H1 (cell line): ENCODE measurements at regions of chr5 and their contacts with region 1.

Region 1: DNA sequence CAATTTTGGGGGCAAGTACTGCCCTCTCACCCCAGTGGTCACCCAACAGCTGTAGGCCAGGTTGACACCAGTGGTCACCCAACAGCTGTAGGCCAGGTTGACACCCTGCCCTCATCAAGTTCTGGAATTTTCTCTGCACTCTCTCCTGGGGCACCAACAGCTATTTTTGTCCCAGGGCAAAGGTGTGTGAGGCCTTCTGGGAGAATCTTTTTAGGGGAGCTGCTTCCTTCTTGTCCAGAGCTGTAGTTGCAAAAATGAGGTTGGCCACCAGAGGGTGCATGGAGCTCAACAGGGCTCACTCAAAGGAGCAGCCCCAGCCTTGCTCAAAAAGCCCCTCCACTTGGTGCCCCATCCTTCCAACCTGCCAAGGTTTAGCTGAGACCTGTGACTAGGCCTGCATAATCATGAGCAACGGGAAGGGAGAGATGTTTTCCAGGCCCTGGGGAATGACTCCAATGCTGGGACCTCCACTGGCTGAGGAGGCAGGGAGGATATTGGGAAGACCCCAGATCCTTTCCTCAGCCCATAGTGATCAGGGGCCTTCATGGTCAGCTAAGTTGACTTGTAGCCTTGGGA is 10.6 kb upstream of the P4HA2 start:
- DNase-seq: peak in 1 of 2 experiments; percentile 95
- H3K4me3 ChIP-seq: no peak overlapping the region
- H3K27ac ChIP-seq: no peak overlapping the region
- H3K4me1 ChIP-seq: no peaks in the 10 kb centered on the region
- H3K27me3 ChIP-seq: no peaks in the 10 kb centered on the region
- CTCF ChIP-seq: peak; percentile 64 to 85 (median 75)
- EP300 ChIP-seq: no peak
- POLR2A ChIP-seq: no peak
- RAD21 ChIP-seq: peak; percentile 76 to 83

Region 2: GRCh38 chr5:132190161-132190817 is 48.0 kb before region 1 on chr5:
- CTCF ChIA-PET with region 1: interaction called, 16 read pairs
- POLR2A ChIA-PET with region 1: no interaction called
- DNase-seq: no peak
- H3K4me3 ChIP-seq: no peak overlapping the region
- H3K27ac ChIP-seq: no peak overlapping the region
- H3K4me1 ChIP-seq: no peaks in the 10 kb centered on the region
- H3K27me3 ChIP-seq: no peaks in the 10 kb centered on the region
- CTCF ChIP-seq: peak in 2 of 3 experiments; percentile 77 to 90; a peak in 3 of 4 replicates
- EP300 ChIP-seq: no peak
- POLR2A ChIP-seq: no peak
- RAD21 ChIP-seq: peak; percentile 55 to 65

Region 3: DNA sequence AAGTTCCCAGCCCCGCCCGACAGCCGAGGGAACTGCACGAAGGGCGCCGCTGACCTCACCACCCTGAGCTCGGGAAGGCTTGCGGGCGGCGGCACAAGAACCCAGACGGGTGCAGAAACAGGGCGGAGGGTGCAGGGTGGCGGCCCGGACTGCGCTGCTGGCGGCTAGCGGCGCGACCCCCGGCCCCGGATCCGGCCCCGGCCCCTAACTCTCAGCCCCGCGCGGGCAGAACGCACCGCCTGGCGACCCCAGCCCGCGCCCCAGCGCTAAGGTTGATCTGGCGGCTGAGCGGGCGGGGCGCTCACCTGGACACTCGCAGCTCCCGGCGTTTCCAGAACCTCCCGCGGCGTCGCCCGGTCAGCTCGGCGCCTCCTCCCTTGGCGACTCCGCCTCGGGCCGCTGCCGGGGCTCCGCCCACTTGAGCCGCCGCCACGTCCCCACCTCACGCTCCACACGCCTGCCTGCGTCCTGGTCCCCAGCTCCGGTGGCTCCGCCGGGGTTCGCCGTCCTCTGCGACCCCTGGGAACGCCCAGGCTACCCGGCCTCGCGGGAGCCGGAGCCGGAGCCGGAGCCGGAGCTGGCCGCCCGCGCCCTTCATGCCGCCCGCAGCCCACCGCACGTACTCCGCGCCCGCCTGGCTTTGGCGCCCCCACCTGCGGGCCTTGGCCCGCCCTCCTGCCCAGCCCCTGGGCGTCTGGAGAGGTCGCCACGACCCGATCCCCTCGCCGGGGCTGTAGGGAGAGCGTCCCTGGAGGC is 10.6 kb before region 1 on chr5 and contains the start of gene P4HA2:
- CTCF ChIA-PET with region 1: interaction called, 39 read pairs
- POLR2A ChIA-PET with region 1: interaction called, 11 read pairs
- DNase-seq: peak; percentile 46 to 86
- H3K4me3 ChIP-seq: peak within 1 kb of the TSS; percentile 57 to 77 (median 60)
- H3K27ac ChIP-seq: no peak within 1 kb of the TSS; the same call in 1 of the 2 replicates
- H3K4me1 ChIP-seq: peaks cover 0 to 7% (median 5%) of the 10 kb centered on the region in 4 experiments; a peak in 4 of 7 replicates
- H3K27me3 ChIP-seq: peaks cover 3 to 22% (median 20%) of the 10 kb centered on the region in 4 experiments
- CTCF ChIP-seq: no peak
- EP300 ChIP-seq: no peak
- POLR2A ChIP-seq: peak in 1 of 2 experiments; percentile 54; a peak in 1 of 3 replicates
- RAD21 ChIP-seq: no peak; a peak in 1 of 4 replicates
- total RNA-seq, gene P4HA2: 7.4 and 8.2 TPM in 2 replicates

Region 4: GRCh38 chr5:132272311-132273210 is 34.3 kb after region 1 on chr5:
- CTCF ChIA-PET with region 1: interaction called, 27 read pairs
- POLR2A ChIA-PET with region 1: no interaction called
- DNase-seq: peak in 1 of 2 experiments; percentile 97
- H3K4me3 ChIP-seq: no peak overlapping the region
- H3K27ac ChIP-seq: no peak overlapping the region
- H3K4me1 ChIP-seq: peaks cover 0 to 6% (median under 1%) of the 10 kb centered on the region in 4 experiments; a peak in 3 of 7 replicates
- H3K27me3 ChIP-seq: no peaks in the 10 kb centered on the region
- CTCF ChIP-seq: peak; percentile 47 to 76 (median 73)
- EP300 ChIP-seq: no peak
- POLR2A ChIP-seq: no peak
- RAD21 ChIP-seq: peak; percentile 66 to 75

Region 5: DNA sequence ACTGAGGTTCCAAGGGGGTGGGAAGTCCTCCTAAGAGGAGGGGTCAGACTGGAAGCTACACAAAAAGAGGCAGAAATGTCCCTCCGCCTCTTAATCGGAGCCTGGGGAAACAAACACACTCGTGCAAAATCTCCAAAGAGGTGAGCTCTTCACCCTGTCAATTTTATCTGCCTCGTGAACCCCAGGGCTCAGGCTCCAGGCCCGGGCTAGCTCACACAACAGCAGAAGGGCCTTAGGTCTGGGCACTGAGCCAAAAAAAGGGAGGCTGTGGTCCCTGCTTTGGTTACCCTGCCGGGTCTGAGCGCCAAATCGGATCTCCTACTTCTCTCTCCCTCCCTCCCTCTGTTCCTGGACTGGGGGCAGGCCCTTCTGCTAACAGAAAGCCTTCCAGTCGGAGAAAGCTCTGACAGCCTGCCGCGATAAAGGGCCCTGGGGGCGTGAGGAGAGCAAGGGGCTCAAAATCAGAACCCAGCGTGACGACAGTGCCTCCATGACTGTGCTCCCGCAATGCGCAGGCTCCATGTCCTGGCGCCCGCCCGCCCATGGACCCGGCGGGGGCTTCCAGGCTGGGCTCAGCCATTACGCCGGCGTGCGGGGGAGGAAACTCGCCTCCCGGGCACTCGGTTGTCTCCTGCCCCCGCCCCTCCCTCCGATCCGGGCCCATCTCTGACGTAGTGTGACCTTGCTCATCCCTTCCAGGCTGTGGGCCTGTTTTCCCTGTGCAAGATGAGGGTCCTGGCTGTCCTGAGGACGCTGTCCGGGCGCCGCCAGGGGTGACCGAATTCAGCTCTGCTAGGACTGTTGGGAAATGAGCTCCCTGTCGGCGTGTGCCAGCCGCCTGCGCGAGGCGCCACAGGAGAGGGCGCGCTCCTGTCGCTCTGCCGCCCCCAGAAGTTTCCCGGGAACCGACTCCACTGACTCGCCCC is 55.1 kb after region 1 on chr5:
- CTCF ChIA-PET with region 1: interaction called, 27 read pairs
- POLR2A ChIA-PET with region 1: no interaction called
- DNase-seq: peak in 1 of 2 experiments; percentile 89
- H3K4me3 ChIP-seq: peak overlapping the region; percentile 53 to 75 (median 65)
- H3K27ac ChIP-seq: peak overlapping the region; percentile 74
- H3K4me1 ChIP-seq: peaks cover 0 to 12% (median 3%) of the 10 kb centered on the region in 4 experiments; a peak in 5 of 7 replicates
- H3K27me3 ChIP-seq: peaks cover 2 to 21% (median 16%) of the 10 kb centered on the region in 4 experiments
- CTCF ChIP-seq: no peak
- EP300 ChIP-seq: peak in 1 of 2 experiments; percentile 56; a peak in 1 of 3 replicates
- POLR2A ChIP-seq: peak in 1 of 2 experiments; percentile 81; a peak in 2 of 3 replicates
- RAD21 ChIP-seq: no peak

Region 6: GRCh38 chr5:132500931-132501630 is 262.8 kb after region 1 on chr5:
- CTCF ChIA-PET with region 1: interaction called, 13 read pairs
- POLR2A ChIA-PET with region 1: interaction called, 3 read pairs
- DNase-seq: peak in 1 of 2 experiments; percentile 81
- H3K4me3 ChIP-seq: no peak overlapping the region
- H3K27ac ChIP-seq: no peak overlapping the region
- H3K4me1 ChIP-seq: peaks cover 0 to 7% (median 3%) of the 10 kb centered on the region in 4 experiments; a peak in 3 of 7 replicates
- H3K27me3 ChIP-seq: no peaks in the 10 kb centered on the region
- CTCF ChIP-seq: peak in 2 of 3 experiments; percentile 82 to 89; a peak in 3 of 4 replicates
- EP300 ChIP-seq: no peak
- POLR2A ChIP-seq: no peak
- RAD21 ChIP-seq: peak; percentile 92 to 94